Dorsolateral prefrontal cortex (tissue), 120 donors: ENCODE measurements at regions of chr1 and their contacts with region 1.

Region 1: GRCh38 chr1:232630047-232630893 is at the start of gene SIPA1L2:
- DNase-seq: peak; percentile 82 to 98 (median 93)
- H3K4me3 ChIP-seq: peak within 1 kb of the TSS; percentile 53 to 92 (median 85)
- H3K27ac ChIP-seq: peak within 1 kb of the TSS; percentile 46 to 99 (median 94)
- H3K27me3 ChIP-seq: no peaks in the 10 kb centered on the region
- CTCF ChIP-seq: peak in 53 of 56 donors; percentile 31 to 77 (median 53)
- total RNA-seq, gene SIPA1L2: 24.3 to 66.4 (median 47.9) TPM

Region 2: DNA sequence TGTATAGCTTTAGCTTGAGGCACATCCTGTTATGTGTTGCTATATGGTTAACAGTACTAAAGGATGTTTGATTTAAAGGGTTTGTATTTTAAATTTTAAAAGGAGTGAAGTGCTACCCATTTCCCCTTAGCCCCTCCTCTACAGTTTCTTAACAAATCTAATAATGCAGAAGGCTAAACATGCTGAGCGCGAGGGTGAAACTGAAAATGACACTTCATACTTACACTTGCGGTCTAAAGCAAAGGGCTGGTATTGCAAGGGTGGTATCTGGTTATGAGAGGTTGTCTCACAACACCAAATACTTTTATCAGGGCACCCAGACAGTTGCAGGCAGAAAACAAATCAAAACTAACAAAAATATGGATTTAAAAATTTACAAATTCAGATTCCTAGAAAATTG is 172.7 kb before region 1 on chr1:
- intact Hi-C with region 1: no loop called
- DNase-seq: no peak
- H3K4me3 ChIP-seq: no peak overlapping the region
- H3K27ac ChIP-seq: no peak overlapping the region
- H3K27me3 ChIP-seq: no peaks in the 10 kb centered on the region
- CTCF ChIP-seq: no peak

Region 3: GRCh38 chr1:232508130-232508701 is 122.1 kb before region 1 on chr1:
- intact Hi-C with region 1: loop called (anchors 2 to 5 kb)
- DNase-seq: peak; percentile 14 to 87 (median 78)
- H3K4me3 ChIP-seq: peak overlapping the region in 44 of 59 donors; percentile 3 to 56 (median 28)
- H3K27ac ChIP-seq: peak overlapping the region in 50 of 59 donors; percentile 1 to 81 (median 58)
- H3K27me3 ChIP-seq: no peaks in the 10 kb centered on the region
- CTCF ChIP-seq: peak in 53 of 56 donors; percentile 28 to 74 (median 58)

Region 4: DNA sequence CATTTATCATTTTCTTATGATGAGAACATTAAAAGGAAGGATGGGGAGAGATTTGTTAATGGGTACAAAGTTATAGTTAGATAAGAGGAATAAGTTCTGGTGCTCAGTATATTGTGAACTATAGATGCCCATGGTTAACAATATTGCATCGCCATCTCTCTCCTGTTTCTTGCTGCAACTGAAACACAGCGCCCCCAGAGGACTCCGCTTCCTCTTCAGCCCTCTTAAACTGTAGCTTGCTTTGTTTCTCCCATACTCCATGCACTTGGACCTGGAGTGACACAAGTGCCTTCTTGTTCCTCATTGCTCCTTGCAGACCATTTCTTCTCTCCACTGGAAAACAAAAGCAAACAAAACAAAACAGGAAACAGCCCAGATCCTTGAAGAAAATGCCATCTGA is 250.1 kb after region 1 on chr1:
- intact Hi-C with region 1: loop called in 1 of 2 experiments (anchors 10 kb)
- DNase-seq: peak in 3 of 10 donors; percentile 11 to 49 (median 28)
- H3K4me3 ChIP-seq: no peak overlapping the region
- H3K27ac ChIP-seq: no peak overlapping the region
- H3K27me3 ChIP-seq: peaks cover 0 to 5% (median 0%) of the 10 kb centered on the region in 45 donors
- CTCF ChIP-seq: peak in 52 of 56 donors; percentile 11 to 65 (median 46)

Region 5: GRCh38 chr1:233025157-233025915 is 395.1 kb after region 1 on chr1:
- intact Hi-C with region 1: loop called (anchors 5 to 10 kb)
- DNase-seq: peak in 5 of 10 donors; percentile 36 to 61 (median 51)
- H3K4me3 ChIP-seq: no peak overlapping the region
- H3K27ac ChIP-seq: no peak overlapping the region
- H3K27me3 ChIP-seq: no peaks in the 10 kb centered on the region
- CTCF ChIP-seq: peak in 50 of 56 donors; percentile 15 to 71 (median 47)

Region 6: DNA sequence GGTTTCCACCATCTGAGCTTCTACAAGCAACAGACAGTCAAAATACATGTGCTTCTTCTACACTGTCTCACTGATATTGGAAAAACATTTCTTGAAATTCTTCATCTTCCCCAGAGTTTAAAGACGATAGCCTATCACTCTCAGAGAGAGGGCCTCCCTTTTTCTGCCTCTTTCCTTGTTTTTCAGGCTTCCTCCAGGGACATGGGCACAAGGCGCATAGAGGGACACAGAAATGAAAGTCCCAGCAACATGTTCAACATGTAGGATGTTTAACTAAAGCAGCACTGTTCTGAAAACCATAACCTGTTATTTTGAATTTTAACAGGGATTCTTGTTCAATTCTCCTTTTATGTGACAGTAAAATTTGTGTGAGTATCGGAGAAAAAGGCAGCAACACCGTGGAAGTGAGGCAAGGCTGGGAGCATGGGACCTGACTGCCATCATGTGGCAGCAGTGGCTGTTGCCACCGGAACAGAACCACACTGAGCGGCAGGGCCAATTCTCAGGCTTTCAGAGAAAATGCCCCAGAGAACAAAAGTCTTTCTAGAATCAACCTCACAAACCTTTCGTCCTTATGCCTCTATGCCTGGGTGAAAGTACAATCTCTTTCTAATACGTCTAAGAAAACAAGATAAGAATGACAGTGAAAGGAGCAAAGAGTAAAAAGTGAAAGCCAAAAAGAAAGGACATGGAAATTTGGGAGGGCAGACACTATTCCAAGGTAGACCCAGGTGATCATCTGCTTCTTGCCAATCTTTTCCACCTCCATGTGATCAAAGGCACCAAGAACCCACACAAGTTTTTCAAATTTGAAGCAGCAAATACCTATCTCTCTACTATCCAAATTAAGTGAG is 610.8 kb after region 1 on chr1:
- intact Hi-C with region 1: loop called (anchors 2 kb)
- DNase-seq: peak; percentile 47 to 79 (median 70)
- H3K4me3 ChIP-seq: peak overlapping the region in 27 of 59 donors; percentile 4 to 49 (median 29)
- H3K27ac ChIP-seq: no peak overlapping the region
- H3K27me3 ChIP-seq: no peaks in the 10 kb centered on the region
- CTCF ChIP-seq: peak in 55 of 56 donors; percentile 26 to 90 (median 79)